ENCODE measurements at regions of chr16 and their contacts with region 1.

Region 1: GRCh38 chr16:2267913-2268666 is at the start of gene RNPS1:
- DNase-seq: peak; percentile 87 to 93
- ATAC-seq: peak; percentile 91 to 93
- H3K4me3 ChIP-seq: peak within 1 kb of the TSS; percentile 68 to 94 (median 86)
- H3K27ac ChIP-seq: peak within 1 kb of the TSS; percentile 93 to 99 (median 96)
- H3K4me1 ChIP-seq: peaks cover 27 to 34% of the 10 kb centered on the region in 2 donors
- H3K27me3 ChIP-seq: no peaks in the 10 kb centered on the region
- CTCF ChIP-seq: peak in 2 of 5 experiments; percentile 35 to 63
- POLR2A ChIP-seq: peak; percentile 97 to 98
- total RNA-seq, gene RNPS1: 158 to 222 (median 172) TPM

Region 2: GRCh38 chr16:1826691-1827575 is 441.2 kb before region 1 on chr16 and contains the starts of genes FAHD1 and HAGH:
- in situ Hi-C with region 1: no loop called
- intact Hi-C with region 1: loop called (anchors 5 kb)
- DNase-seq: peak; percentile 92 to 93
- ATAC-seq: peak; percentile 92
- H3K4me3 ChIP-seq: peak within 1 kb of the TSS; percentile 74 to 99 (median 89)
- H3K27ac ChIP-seq: peak within 1 kb of the TSS; percentile 83 to 99 (median 92)
- H3K4me1 ChIP-seq: peaks cover 56 to 60% of the 10 kb centered on the region in 2 donors
- H3K27me3 ChIP-seq: no peaks in the 10 kb centered on the region
- CTCF ChIP-seq: peak in 2 of 5 experiments; percentile 33 to 37
- POLR2A ChIP-seq: peak; percentile 68 to 70
- total RNA-seq, gene FAHD1: 28.2 to 57.1 (median 49.1) TPM
- total RNA-seq, gene HAGH: 216 to 440 (median 261) TPM

Region 3: GRCh38 chr16:2009789-2010510 is 258.1 kb before region 1 on chr16 and contains the start of gene ZNF598:
- in situ Hi-C with region 1: no loop called
- intact Hi-C with region 1: loop called (anchors 5 kb)
- DNase-seq: peak; percentile 61 to 75
- ATAC-seq: peak; percentile 90 to 95
- H3K4me3 ChIP-seq: peak within 1 kb of the TSS; percentile 63 to 97 (median 84)
- H3K27ac ChIP-seq: peak within 1 kb of the TSS; percentile 85 to 99 (median 95)
- H3K4me1 ChIP-seq: peaks cover 37 to 47% of the 10 kb centered on the region in 2 donors
- H3K27me3 ChIP-seq: no peaks in the 10 kb centered on the region
- CTCF ChIP-seq: peak in 1 of 5 experiments; percentile 8
- POLR2A ChIP-seq: peak; percentile 85 to 96
- total RNA-seq, gene ZNF598: 57.0 to 92.2 (median 75.4) TPM

Region 4: DNA sequence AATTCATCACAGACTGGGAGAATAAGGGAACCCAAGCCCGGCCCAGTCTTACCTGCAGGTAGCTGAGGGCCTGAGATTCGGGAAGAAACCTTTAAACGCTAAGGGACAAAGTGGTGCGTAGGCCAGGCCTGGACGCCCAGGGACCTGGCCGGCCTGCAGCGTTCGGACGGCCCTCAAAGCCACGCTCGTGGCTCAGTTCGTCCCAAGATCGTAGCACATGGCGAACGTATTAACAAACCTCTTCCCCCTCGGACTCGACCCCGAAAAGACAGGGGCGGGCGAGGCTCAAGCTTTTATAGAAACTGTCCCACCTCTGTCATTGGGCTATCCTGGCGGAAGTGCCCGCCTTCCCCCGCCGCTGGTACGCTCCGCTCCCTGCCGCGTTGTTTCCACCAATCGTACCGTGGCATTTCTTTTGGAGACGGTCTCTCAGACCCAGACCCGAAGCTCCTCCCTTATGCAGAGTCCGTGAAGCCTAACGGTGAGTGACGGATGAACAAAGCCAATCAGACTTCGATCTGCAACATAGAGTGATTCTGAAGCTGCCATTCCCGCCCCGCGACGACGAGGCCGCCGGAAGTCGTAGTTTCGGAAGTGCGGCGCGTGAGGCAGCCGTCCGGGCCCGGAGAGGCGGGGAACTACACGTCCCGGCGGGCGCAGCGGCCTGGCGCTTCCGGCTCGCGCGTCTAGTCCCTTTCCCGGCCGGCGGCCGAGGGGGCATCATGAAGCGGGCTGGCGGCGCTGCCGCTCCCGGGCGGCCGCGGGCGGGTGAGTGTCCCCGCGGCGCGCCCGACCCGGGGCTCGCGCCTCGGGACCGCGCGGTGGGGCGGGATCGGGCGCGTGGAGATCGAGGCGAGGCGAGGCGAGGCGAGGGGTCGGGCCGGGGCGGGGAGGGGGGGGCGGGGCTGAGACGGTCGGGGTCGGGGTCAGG is 112.7 kb before region 1 on chr16 and contains the start of gene TRAF7:
- in situ Hi-C with region 1: no loop called
- intact Hi-C with region 1: loop called (anchors 1 kb)
- DNase-seq: peak; percentile 99 to 100
- ATAC-seq: peak; percentile 95 to 98
- H3K4me3 ChIP-seq: peak within 1 kb of the TSS; percentile 71 to 89 (median 82)
- H3K27ac ChIP-seq: peak within 1 kb of the TSS; percentile 84 to 90 (median 86)
- H3K4me1 ChIP-seq: peaks cover 53 to 66% of the 10 kb centered on the region in 2 donors
- H3K27me3 ChIP-seq: no peaks in the 10 kb centered on the region
- CTCF ChIP-seq: peak in 1 of 5 experiments; percentile 3
- POLR2A ChIP-seq: peak; percentile 99
- total RNA-seq, gene TRAF7: 39.5 to 71.4 (median 55.9) TPM

Region 5: DNA sequence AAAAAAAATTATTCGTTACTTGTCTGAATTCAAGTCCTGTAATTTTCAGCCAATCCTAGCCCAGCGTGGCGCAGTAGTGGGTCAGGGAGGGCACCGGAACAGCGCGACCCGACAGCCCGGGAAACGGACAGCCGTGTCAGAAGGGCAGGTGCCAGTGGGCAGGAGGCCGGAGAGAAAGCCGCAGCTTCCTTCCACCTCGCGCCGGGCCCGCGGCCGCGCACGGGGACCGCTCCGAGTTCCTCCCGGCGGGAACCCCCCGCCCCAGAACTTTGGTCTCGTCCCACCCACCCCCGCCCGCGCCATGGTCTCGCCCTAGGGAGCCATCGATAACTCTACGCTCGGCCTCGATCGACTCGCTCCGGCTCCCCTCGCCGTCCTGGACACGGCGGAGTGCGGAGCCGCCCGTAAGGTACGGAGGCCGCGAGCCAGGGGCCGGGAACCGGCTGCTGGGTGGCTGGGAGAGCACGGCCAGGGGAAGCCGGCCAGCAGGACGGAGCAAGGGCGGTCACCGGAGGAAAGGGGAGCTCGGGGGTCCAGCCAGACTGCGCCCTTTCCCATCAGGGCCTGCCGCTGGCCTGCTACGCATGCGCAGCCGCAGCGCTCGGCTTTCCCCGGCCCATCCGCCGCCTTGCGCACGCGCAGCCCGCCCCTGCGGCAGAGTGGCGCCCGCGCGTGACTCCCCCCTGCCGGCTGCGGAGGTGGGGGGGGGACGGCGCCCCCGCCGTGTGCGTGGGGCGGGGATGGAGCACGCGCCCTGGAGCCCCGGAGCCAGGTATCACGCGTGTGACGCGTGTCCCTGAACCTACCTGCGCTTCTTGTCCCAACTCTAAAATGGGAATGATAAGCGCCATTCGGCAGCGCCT is 62.8 kb before region 1 on chr16 and contains the start of gene MLST8:
- in situ Hi-C with region 1: no loop called
- intact Hi-C with region 1: loop called (anchors 1 kb)
- DNase-seq: peak; percentile 70 to 78
- ATAC-seq: peak; percentile 87 to 91
- H3K4me3 ChIP-seq: peak within 1 kb of the TSS; percentile 82 to 94 (median 92)
- H3K27ac ChIP-seq: peak within 1 kb of the TSS; percentile 96 to 100 (median 100)
- H3K4me1 ChIP-seq: peaks cover 19 to 20% of the 10 kb centered on the region in 2 donors
- H3K27me3 ChIP-seq: no peaks in the 10 kb centered on the region
- CTCF ChIP-seq: peak in 1 of 5 experiments; percentile 42
- POLR2A ChIP-seq: peak; percentile 73 to 80
- total RNA-seq, gene MLST8: 40.3 to 77.0 (median 73.5) TPM

Region 6: GRCh38 chr16:2251483-2252240 is 16.4 kb before region 1 on chr16 and contains the start of gene ECI1:
- in situ Hi-C with region 1: no loop called
- intact Hi-C with region 1: loop called (anchors 1 kb)
- DNase-seq: peak; percentile 93 to 95
- ATAC-seq: peak; percentile 92 to 96
- H3K4me3 ChIP-seq: peak within 1 kb of the TSS; percentile 68 to 89 (median 70)
- H3K27ac ChIP-seq: peak within 1 kb of the TSS; percentile 86 to 97 (median 92)
- H3K4me1 ChIP-seq: peaks cover 20 to 22% of the 10 kb centered on the region in 2 donors
- H3K27me3 ChIP-seq: no peaks in the 10 kb centered on the region
- CTCF ChIP-seq: peak; percentile 64 to 92 (median 87)
- POLR2A ChIP-seq: peak; percentile 87 to 94
- total RNA-seq, gene ECI1: 74.0 to 137 (median 79.3) TPM

Region 7: DNA sequence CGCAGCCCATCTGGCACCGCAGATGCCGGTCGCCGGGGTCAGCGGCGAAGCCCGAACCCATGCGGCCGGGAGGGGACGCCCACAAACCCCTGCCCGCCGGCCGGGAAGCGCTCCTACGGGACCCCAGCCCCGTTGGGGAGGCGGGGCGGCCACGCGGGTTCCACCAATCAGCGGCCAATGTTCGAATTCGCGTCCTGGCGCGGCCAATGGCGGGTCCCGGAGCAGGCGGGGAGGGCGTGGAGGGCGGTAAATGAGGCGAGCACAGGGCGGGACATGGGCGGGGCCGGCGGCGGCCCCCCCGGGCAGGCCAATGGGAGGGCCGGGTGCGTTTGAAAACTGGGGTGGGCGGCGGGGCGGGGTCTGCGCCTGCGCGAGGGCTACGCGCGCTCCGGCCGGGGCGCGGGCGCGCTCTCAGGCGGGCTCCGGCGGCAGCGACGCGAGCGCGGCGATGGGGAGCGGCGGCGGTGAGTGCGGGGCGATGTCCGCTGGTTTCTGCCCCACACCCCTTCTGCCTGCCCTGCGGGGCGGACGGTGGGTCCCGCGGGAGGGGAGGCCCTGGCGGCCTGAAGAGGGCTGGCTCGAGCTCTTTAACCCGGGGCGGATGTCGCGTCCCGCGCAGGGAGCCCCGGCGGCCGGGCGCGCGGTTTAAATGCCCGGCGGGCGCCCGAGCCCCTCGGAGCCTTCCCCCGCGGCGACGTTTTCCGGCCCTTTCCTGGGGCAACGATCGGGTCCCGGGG is 161.1 kb after region 1 on chr16 and contains the start of gene CCNF:
- in situ Hi-C with region 1: no loop called
- intact Hi-C with region 1: no loop called
- DNase-seq: peak; percentile 96 to 97
- ATAC-seq: peak; percentile 95 to 97
- H3K4me3 ChIP-seq: peak within 1 kb of the TSS; percentile 64 to 97 (median 87)
- H3K27ac ChIP-seq: peak within 1 kb of the TSS; percentile 73 to 78 (median 76)
- H3K4me1 ChIP-seq: peaks cover 6 to 8% of the 10 kb centered on the region in 2 donors
- H3K27me3 ChIP-seq: no peaks in the 10 kb centered on the region
- CTCF ChIP-seq: peak in 2 of 5 experiments; percentile 26 to 35
- POLR2A ChIP-seq: peak; percentile 51 to 52
- total RNA-seq, gene CCNF: 1.8 to 3.6 (median 2.4) TPM

Region 8: DNA sequence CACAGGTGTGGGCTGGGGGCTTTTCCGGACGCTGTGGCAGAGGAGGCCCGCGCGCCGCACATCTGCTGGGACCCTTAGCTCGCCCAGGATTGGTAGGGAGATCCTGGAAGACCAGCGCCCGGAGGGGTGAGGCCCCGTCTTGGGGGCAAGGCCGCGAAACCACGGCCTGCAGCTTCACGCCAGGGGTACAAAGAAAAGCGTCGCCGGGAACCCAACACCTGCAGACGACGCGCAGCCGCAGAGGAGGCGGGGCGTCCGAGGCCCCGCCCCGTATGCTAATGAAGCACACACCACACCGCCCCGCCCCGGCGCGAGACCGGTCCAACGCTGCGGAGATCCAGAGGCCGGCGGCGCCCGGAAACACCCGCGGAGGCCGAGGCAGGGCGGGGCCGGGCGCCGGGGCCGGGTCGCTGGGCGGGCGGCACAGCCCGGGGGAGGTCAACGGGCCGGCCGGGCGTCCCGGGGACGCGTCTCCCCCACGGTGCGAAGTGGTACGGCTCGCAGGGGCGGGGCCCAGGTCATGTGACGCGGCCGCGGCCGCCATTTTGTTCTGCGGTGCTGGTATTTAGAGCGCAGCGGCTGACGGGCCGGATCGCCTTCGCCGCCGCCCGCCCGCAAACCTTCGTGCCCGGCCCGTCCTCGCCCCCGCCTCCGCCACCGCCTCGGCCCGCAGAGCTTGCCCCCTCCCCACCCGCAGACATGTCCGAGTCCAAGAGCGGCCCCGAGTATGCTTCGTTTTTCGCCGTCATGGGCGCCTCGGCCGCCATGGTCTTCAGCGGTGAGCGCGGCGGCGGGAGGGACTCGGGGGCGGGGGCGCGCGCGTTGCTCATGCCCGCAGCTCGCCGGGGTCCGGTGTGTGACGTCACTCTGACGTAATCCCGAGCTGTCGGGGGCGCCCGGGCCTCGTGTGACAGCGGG is 245.6 kb after region 1 on chr16 and contains the start of gene ATP6V0C:
- in situ Hi-C with region 1: no loop called
- intact Hi-C with region 1: loop called (anchors 10 kb)
- DNase-seq: peak; percentile 82 to 90
- ATAC-seq: peak; percentile 87 to 91
- H3K4me3 ChIP-seq: peak within 1 kb of the TSS; percentile 83 to 100 (median 88)
- H3K27ac ChIP-seq: peak within 1 kb of the TSS; percentile 98 to 100 (median 98)
- H3K4me1 ChIP-seq: peaks cover 44 to 48% of the 10 kb centered on the region in 2 donors
- H3K27me3 ChIP-seq: no peaks in the 10 kb centered on the region
- CTCF ChIP-seq: no peak
- POLR2A ChIP-seq: peak; percentile 91
- total RNA-seq, gene ATP6V0C: 22.1 to 84.2 (median 56.2) TPM